ENCODE measurements at regions of chr17 and their contacts with region 1.

Region 1: GRCh38 chr17:82065638-82066303 is at the start of gene DUS1L:
- DNase-seq: peak; percentile 68 to 72
- ATAC-seq: peak; percentile 52 to 65; a peak in 5 of 6 replicates
- H3K4me3 ChIP-seq: peak within 1 kb of the TSS; percentile 94
- H3K27ac ChIP-seq: peak within 1 kb of the TSS; percentile 94 to 96
- H3K4me1 ChIP-seq: peaks cover 19% of the 10 kb centered on the region
- CTCF ChIP-seq: no peak
- EP300 ChIP-seq: no peak
- POLR2A ChIP-seq: peak; percentile 59
- RAD21 ChIP-seq: no peak
- polyA plus RNA-seq, gene DUS1L: 48.1 and 59.5 TPM in 2 replicates

Region 2: DNA sequence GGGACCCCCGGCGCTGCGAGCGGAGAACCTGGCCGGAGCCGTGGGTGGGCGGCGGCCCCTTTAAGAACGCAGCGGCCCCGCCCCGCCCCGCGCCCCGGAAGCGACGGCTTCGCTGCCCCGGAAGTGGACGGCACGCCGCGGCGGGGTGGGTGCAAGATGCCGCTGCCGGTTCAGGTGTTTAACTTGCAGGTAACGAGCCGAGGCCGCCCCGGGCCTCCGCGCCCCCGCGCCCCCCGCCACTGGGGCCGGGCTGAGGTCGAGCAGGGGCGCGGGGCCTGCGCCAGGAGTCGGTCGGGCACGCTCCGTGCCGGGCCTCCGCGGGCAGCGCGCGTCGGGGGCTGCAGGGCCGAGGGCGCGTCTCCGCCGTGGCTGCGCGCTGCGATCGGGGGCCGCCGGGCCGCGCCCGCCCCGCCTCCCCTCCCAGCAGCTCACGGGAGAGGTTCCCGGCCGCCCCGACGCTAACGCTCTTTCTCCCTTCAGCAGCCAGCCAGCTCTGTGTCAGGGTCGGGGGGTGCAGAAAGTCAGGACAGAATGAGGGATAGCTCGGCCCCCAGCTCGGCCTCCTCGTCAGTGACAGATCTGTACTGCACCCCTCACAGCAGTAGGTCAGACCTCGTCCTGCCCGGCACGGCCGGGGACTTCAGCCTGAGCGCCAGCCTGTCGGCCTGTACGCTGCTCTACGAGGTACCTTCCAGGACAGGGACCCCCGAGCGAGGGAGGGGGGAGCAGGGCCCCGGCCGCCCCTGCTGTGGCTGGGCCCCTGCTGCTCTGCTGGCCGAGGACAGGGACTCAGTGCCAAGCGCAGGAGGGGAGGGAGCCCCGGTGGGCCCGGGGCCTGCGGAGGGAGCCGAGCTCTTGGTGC is 13.8 kb before region 1 on chr17 and contains the starts of genes GPS1 and RFNG:
- CTCF ChIA-PET with region 1: interaction called, 28 read pairs
- POLR2A ChIA-PET with region 1: interaction called, 3 read pairs
- DNase-seq: peak; percentile 69 to 85
- ATAC-seq: peak; percentile 63
- H3K4me3 ChIP-seq: peak within 1 kb of the TSS; percentile 97
- H3K27ac ChIP-seq: peak within 1 kb of the TSS; percentile 91 to 95
- H3K4me1 ChIP-seq: peaks cover 16% of the 10 kb centered on the region; the same call in 2 of the 3 replicates
- CTCF ChIP-seq: no peak
- EP300 ChIP-seq: no peak
- POLR2A ChIP-seq: peak; percentile 44
- RAD21 ChIP-seq: no peak
- polyA plus RNA-seq, gene GPS1: 89.4 and 93.8 TPM in 2 replicates
- polyA plus RNA-seq, gene RFNG: 8.4 and 8.9 TPM in 2 replicates

Region 3: DNA sequence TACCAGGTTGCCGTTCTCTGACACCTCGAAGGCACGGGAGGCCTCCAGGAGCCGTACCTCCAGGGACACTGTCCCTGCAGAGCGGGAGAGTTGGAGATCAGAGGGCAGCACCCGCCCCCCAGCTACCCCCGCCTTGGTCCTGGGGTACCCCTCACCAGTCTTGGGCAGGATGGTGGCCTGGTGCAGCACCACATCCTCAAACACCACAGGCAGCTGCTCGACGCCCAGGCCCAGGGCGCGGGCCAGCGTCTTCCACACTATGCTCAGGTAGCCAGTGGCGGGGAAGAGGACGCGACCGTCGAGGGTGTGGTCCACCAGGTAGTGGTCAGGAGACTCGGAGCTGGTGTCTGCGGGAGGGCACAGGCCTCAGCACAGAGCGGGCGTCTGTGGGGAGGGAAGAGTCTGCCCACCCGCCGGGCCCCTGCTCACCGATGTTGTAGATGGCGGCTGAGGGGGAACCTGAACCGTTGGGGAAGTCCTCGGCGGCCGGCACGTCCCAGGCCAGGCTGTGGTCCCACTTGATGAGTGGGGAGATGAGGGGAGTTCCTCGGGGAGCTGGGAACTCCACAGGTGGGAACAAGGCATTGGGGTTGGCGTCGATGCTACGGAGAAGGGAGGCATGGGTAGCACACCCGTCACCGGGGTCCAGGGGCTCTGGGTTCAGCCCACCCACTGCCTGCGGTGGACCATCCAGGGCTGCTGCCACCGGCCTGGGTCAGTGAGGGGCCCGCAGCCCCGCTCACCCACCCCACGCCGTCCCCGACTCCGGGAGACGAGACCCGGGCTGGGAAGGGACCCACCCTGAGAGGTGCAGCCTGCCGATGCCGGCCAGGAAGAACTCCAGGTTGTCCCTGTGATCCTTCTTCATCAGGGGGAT is 22.4 kb after region 1 on chr17:
- CTCF ChIA-PET with region 1: no interaction called
- POLR2A ChIA-PET with region 1: no interaction called
- DNase-seq: no peak
- ATAC-seq: no peak
- H3K4me3 ChIP-seq: no peak overlapping the region
- H3K27ac ChIP-seq: no peak overlapping the region
- H3K4me1 ChIP-seq: no peaks in the 10 kb centered on the region
- CTCF ChIP-seq: no peak
- EP300 ChIP-seq: no peak
- POLR2A ChIP-seq: no peak
- RAD21 ChIP-seq: no peak

Region 4: GRCh38 chr17:82098072-82098821 is 32.5 kb after region 1 on chr17 and contains the start of gene FASN:
- CTCF ChIA-PET with region 1: interaction called, 3 read pairs
- POLR2A ChIA-PET with region 1: interaction called, 11 read pairs
- DNase-seq: peak; percentile 97 to 100
- ATAC-seq: peak; percentile 70 to 72
- H3K4me3 ChIP-seq: peak within 1 kb of the TSS; percentile 91
- H3K27ac ChIP-seq: peak within 1 kb of the TSS; percentile 95 to 96
- H3K4me1 ChIP-seq: peaks cover 52% of the 10 kb centered on the region
- CTCF ChIP-seq: peak; percentile 64
- EP300 ChIP-seq: no peak
- POLR2A ChIP-seq: peak; percentile 99
- RAD21 ChIP-seq: no peak; a peak in 3 of 5 replicates
- polyA plus RNA-seq, gene FASN: 12.9 and 16.3 TPM in 2 replicates

Region 5: DNA sequence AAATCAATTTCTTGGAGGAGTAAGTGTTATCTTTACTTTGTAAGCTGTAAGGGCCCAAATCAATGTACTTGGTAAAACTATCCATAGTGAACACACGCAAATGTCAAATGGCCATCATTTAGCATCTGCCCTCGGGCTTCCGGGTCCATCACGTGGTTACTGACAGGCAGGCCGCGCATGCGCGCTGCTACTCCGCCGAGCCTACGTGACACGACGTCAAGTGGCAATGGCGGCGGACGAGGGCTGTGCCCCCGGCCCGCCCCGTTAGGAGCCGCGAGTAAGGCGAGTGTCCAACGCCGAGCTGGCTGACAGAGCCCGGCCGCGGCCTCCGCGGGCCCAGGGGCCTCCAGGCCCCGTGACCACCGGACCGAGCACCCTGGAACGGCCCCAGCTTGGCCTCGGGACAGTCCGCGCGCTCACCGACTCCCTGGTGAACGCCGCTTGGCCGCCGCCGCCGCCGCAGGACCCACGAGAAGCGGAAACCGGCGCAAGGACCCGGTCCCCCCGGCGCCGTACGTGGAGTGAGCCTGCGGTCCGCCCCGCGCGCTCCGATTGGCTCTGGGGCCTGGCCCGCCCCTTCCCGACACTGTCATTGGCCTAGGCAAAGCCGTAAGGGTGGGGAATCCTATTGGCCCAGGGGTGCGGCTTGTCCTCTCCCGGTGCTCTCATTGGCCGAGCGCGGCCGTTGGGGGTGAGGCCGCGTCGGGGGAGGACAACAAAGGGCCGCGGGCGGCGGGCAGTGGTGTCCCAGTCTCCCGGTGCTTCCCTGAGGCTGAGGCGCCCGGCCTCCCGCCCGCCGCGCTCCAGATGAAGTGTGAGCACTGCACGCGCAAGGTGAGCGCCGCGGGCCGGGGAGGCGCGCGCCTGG is 392.5 kb after region 1 on chr17 and contains the start of gene NARF:
- CTCF ChIA-PET with region 1: no interaction called
- POLR2A ChIA-PET with region 1: no interaction called
- DNase-seq: peak; percentile 99 to 100
- ATAC-seq: peak; percentile 96 to 100
- H3K4me3 ChIP-seq: peak within 1 kb of the TSS; percentile 74
- H3K27ac ChIP-seq: peak within 1 kb of the TSS; percentile 96 to 97
- H3K4me1 ChIP-seq: peaks cover 14% of the 10 kb centered on the region
- CTCF ChIP-seq: no peak
- EP300 ChIP-seq: no peak
- POLR2A ChIP-seq: peak; percentile 69
- RAD21 ChIP-seq: no peak
- polyA plus RNA-seq, gene NARF: 89.6 and 108 TPM in 2 replicates